Caco-2 (cell line): ENCODE measurements at regions of chr20 and their contacts with region 1.

Region 1: GRCh38 chr20:40706977-40707582 is 18.0 kb upstream of the MAFB start:
- DNase-seq: peak; percentile 91 to 92
- H3K4me3 ChIP-seq: no peak overlapping the region
- H3K4me3 Mint-ChIP-seq: peak overlapping the region; percentile 12
- H3K27ac Mint-ChIP-seq: peak overlapping the region; percentile 3
- H3K4me1 ChIP-seq: peaks cover 19% of the 10 kb centered on the region
- H3K4me1 Mint-ChIP-seq: peaks cover 10% of the 10 kb centered on the region
- H3K27me3 ChIP-seq: peaks cover 3% of the 10 kb centered on the region; the same call in 1 of the 2 replicates
- H3K27me3 Mint-ChIP-seq: peaks cover 17% of the 10 kb centered on the region
- CTCF ChIP-seq: peak; percentile 67 to 94

Region 2: DNA sequence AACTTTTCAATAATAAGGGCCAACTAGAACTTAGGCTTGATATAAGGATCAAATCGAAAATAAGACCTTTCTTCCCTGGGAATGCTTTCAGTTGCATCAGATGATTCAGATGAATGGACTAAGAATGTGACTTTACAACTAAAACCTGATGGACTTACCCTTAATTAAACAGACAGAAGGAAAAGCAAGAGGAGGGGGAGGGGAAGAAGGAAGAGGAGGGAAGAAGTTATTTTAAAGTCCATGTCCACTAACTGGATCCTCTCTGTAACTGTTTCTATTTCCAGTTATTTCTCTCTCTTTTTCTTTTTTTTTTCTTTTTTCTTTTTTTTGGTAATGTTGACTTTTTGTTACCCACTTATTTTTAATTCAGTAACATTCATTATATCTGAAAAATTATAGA is 504.0 kb before region 1 on chr20:
- CTCF ChIA-PET with region 1: no interaction called
- POLR2A ChIA-PET with region 1: no interaction called
- intact Hi-C with region 1: loop called (anchors 5 kb)
- DNase-seq: no peak
- H3K4me3 ChIP-seq: no peak overlapping the region
- H3K4me3 Mint-ChIP-seq: no peak overlapping the region
- H3K27ac Mint-ChIP-seq: no peak overlapping the region
- H3K4me1 ChIP-seq: no peaks in the 10 kb centered on the region
- H3K4me1 Mint-ChIP-seq: no peaks in the 10 kb centered on the region
- H3K27me3 ChIP-seq: no peaks in the 10 kb centered on the region
- H3K27me3 Mint-ChIP-seq: peaks cover 19% of the 10 kb centered on the region
- CTCF ChIP-seq: no peak

Region 3: GRCh38 chr20:40563296-40563944 is 143.7 kb before region 1 on chr20:
- CTCF ChIA-PET with region 1: no interaction called
- POLR2A ChIA-PET with region 1: no interaction called
- intact Hi-C with region 1: no loop called
- DNase-seq: no peak
- H3K4me3 ChIP-seq: no peak overlapping the region
- H3K4me3 Mint-ChIP-seq: no peak overlapping the region
- H3K27ac Mint-ChIP-seq: no peak overlapping the region
- H3K4me1 ChIP-seq: no peaks in the 10 kb centered on the region
- H3K4me1 Mint-ChIP-seq: no peaks in the 10 kb centered on the region
- H3K27me3 ChIP-seq: peaks cover 2% of the 10 kb centered on the region; the same call in 1 of the 2 replicates
- H3K27me3 Mint-ChIP-seq: peaks cover 2% of the 10 kb centered on the region
- CTCF ChIP-seq: no peak

Region 4: DNA sequence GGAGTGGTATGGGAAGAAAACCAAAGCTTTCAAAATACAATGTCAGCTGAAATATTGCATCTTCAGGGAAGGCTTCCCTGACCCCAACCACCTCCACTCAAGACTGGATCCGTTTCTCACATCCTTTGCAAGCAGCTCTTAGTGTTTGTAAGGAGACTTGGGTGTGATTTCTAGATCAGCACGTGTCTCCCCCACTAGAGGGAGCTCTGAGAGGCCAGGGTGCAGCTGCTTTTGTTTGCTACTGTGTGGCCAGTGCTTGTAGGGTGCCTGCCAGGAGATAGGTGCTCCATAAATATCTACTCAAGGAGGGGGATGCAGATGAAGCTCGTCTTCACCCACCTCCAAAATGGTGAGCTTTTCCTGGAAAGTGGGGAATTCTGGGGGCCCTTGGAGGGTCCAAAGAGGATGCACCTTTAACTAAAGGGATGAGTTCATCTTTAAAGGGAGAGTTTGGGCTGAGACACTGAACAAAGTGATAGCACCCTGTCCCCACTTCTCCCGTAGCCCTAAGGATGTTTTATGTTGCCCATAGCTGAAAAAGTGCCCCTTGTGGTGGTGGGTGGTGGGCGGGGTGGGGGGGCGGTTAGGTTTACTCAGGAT is 34.5 kb after region 1 on chr20:
- CTCF ChIA-PET with region 1: interaction called, 11 read pairs
- POLR2A ChIA-PET with region 1: no interaction called
- intact Hi-C with region 1: no loop called
- DNase-seq: peak; percentile 74 to 82
- H3K4me3 ChIP-seq: no peak overlapping the region
- H3K4me3 Mint-ChIP-seq: no peak overlapping the region
- H3K27ac Mint-ChIP-seq: no peak overlapping the region
- H3K4me1 ChIP-seq: no peaks in the 10 kb centered on the region
- H3K4me1 Mint-ChIP-seq: no peaks in the 10 kb centered on the region
- H3K27me3 ChIP-seq: no peaks in the 10 kb centered on the region; the same call in 1 of the 2 replicates
- H3K27me3 Mint-ChIP-seq: peaks cover 35% of the 10 kb centered on the region
- CTCF ChIP-seq: peak; percentile 91 to 96

Region 5: DNA sequence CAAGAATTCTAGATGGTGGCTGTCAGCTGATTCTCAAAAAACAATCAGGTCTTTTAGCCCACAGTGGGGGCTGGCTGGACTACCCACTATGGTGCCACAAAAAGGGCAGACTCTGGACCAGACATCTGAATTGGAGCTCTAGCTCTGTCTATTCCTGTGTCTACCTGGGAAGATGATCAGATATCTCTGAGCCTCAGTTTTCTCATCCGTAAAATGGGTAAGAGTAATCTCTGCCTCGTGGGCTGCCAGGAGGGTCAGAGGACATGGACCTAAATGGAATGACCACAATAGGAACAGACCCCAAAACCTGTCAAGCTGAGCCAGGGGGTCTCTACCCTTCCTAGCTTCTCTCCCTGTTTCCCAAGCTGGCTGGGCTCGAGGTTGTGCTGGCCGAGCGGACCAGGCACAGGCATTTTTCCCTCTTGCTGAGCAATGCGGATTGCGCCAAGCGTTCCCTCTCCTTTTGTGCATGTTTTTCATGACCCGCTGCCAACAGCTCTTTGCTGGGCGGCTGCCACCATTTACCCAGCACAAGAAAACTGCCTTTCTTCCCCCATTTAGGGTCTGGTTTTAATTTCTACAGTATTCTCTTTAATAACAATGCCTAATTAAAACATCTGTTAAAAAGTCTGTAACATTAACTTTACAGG is 56.7 kb after region 1 on chr20:
- CTCF ChIA-PET with region 1: no interaction called
- POLR2A ChIA-PET with region 1: no interaction called
- intact Hi-C with region 1: no loop called
- DNase-seq: no peak
- H3K4me3 ChIP-seq: no peak overlapping the region
- H3K4me3 Mint-ChIP-seq: no peak overlapping the region
- H3K27ac Mint-ChIP-seq: no peak overlapping the region
- H3K4me1 ChIP-seq: no peaks in the 10 kb centered on the region
- H3K4me1 Mint-ChIP-seq: no peaks in the 10 kb centered on the region
- H3K27me3 ChIP-seq: peaks cover 2% of the 10 kb centered on the region
- H3K27me3 Mint-ChIP-seq: peaks cover 27% of the 10 kb centered on the region
- CTCF ChIP-seq: no peak